ENCODE measurements at regions of chr1 and their contacts with region 1.

Region 1: DNA sequence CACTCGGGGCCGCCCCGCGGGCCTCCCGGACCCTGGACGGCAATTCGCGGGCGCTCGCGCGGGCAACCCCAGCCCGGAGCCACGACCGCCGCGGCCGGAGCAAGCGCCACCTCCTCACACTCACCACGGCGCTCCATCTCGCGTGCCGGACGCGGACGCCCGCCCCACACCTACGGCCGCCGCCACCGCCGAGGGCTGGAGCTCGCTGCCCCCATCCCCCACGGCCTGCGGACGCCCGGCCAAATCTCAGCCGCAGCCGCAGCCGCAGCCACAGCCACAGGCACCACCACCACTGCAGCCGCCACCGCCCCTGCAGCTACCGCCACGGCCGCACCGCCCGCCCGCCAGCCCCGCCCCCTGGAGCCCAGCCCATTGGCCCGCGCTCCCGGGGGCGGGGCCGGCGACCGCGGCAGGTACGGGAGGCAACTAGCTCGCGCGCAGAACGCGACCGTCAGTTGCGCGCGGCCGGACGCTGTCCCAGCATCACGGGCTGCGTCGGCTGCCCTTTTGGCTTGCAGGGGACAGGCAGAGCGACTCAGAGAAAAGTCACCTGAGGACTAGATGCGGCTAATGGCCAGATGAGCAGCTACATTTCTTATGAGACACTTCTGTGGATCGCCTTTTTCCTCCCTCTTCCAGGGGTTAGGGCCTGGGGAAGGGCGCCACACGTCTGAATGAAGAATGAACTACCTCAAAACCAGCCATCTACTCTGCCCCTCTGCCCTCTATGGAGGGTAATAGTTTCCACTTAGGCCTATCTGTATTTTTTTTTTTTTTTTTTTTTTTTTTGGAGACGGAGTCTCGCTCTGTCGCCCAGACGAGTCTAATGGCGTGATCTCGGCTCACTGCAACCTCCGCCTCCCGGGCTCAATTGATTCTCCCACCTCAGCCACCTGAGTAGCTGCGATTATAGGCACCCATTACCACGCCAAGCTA is at the start of gene ARHGAP29:
- DNase-seq: peak; percentile 95
- total RNA-seq, gene ARHGAP29: 25.5 TPM

Region 2: GRCh38 chr1:94045465-94046056 is 192.0 kb before region 1 on chr1:
- intact Hi-C with region 1: loop called (anchors 5 kb)
- DNase-seq: peak; percentile 90

Region 3: DNA sequence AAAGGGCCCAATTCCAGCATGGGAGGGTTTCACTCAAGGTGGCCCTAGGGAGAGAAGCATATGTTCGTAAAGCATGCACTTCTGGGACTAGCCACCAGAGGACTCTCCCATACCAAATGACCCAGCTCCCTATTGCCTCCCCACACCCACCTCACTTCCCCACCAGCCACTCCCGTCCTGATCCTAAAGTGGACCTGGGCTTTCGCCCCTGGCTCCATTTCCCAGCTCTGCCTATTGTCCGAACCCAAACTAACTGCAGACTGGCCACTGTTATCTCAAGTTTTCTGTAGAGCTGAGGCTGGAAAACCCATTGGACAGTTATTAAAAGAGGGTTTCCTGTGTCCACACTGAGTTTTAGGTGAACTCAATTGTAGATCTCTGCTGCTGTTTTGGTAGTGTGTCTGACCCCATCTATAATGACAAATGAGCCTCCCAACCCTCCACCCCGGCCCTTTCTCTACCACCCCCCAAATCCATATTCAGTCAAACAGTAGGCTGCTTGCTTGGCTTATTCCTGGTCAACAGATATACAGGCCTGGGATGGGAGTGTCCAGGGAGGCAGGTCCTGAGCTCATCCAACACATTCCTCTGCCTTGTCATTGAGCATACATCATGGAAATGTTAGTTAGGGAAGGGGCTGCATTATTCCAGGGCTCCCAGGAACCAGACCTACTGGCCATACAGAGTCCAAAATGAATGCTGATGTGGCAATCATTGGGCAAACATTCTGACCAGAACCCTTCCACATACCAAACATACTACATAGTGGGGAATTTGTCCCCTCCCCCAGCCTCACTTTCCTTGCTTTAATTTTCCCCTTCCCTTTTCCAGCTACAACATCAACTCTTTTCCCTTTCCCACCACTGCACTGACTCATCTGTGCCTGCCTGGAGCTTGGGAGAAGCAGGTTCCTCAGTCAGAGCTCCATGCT is 175.8 kb before region 1 on chr1:
- intact Hi-C with region 1: loop called (anchors 2 kb)
- DNase-seq: no peak

Region 4: GRCh38 chr1:94105957-94106529 is 131.5 kb before region 1 on chr1:
- intact Hi-C with region 1: no loop called
- DNase-seq: peak; percentile 49

Region 5: DNA sequence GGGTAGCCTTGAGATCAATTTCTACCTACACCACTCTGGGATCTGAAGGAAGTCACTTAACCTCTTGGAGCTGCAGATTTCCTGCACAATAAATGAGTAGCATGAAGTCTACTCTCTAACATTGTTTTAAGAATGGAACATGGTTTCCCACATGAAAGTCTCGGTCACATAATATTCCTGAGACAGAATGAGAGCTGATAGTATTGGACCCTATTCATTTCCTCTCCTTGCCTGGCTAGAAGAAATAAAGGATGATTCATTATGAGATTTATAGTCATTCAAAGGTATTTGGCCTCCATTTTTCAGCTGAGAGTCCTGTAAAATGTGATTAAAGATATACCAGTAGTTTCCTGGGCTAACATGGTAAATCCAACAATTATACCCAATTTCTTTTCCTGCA is 56.9 kb before region 1 on chr1:
- intact Hi-C with region 1: loop called (anchors 5 kb)
- DNase-seq: no peak

Region 6: DNA sequence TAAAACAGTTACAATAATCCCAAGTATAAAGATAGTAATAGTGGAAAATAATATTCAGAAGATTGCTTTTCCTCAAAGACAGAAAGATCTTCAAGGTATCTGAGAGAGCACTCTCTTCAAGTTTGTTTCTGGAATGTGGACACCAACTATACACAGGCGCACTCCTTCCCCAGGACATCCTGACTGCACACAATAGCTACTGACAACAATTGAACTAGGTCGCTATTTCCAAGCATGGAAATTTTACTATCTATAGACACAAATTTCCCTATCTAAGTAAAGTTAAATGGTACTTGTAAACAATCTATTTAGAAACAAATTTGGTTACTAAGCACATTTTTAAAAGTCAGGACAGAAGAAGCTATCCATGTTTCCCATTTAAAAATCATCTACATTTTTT is 19.2 kb before region 1 on chr1:
- intact Hi-C with region 1: no loop called
- DNase-seq: no peak

Region 7: GRCh38 chr1:94329986-94330385 is 92.4 kb after region 1 on chr1:
- intact Hi-C with region 1: loop called (anchors 2 kb)
- DNase-seq: no peak

Region 8: GRCh38 chr1:94417978-94418663 is 180.6 kb after region 1 on chr1 and contains the start of gene ABCD3:
- intact Hi-C with region 1: loop called (anchors 5 kb)
- DNase-seq: peak; percentile 97
- total RNA-seq, gene ABCD3: 49.4 TPM